Ascending aorta (tissue), 2 donors: ENCODE measurements at regions of chr14 and their contacts with region 1.

Region 1: DNA sequence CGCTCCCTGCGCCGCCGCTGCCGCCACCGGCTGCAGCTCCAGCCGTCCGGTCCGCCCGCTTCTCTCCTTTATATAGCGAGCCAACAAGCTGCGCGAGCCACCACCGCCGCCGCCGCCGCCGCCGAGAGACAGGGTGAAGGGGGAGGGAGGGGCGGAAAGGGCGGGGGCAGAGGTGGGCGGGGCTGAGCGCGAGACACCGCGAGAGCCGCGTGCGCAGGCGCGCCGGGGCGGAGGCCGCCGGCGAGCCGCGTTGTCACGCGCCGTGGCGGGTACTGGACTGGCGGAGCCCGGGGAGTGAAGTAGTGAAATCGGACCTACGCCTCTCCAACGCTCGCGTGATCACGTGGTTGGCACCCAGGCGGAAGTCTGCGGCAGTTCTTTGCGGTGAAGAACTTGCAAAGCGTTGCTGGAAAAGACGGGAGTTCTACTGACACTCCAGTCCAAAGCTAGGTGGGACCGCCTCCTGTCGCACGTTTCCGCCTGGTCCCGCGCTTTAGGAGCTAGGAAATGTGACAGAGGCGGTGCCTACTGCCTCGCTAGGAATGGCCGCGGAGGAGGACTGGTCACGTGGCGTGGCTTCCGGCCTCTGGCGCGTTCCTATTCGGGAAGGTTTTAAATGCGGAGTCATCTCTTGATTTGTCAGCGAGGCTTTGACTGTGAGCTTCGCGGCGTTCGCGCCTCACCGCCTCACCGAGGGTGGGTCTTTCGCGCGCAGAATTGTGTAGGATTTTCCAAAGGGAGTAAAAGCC is at the start of gene GTF2A1:
- DNase-seq: peak; percentile 86 to 97
- H3K4me3 ChIP-seq: peak within 1 kb of the TSS; percentile 91 to 96
- H3K27ac ChIP-seq: peak within 1 kb of the TSS; percentile 98 to 99
- H3K4me1 ChIP-seq: peaks cover 2 to 23% of the 10 kb centered on the region in 2 donors
- H3K27me3 ChIP-seq: no peaks in the 10 kb centered on the region
- CTCF ChIP-seq: no peak
- total RNA-seq, gene GTF2A1: 47.9 TPM

Region 2: GRCh38 chr14:80941241-80942182 is 279.5 kb before region 1 on chr14 and contains the start of gene CEP128:
- intact Hi-C with region 1: loop called (anchors 5 kb)
- DNase-seq: peak; percentile 85 to 98
- H3K4me3 ChIP-seq: peak within 1 kb of the TSS; percentile 58 to 74
- H3K27ac ChIP-seq: peak within 1 kb of the TSS in 1 of 2 donors; percentile 8
- H3K4me1 ChIP-seq: peaks cover 0 to 4% of the 10 kb centered on the region in 2 donors
- H3K27me3 ChIP-seq: no peaks in the 10 kb centered on the region
- CTCF ChIP-seq: no peak
- total RNA-seq, gene CEP128: 3.3 TPM

Region 3: DNA sequence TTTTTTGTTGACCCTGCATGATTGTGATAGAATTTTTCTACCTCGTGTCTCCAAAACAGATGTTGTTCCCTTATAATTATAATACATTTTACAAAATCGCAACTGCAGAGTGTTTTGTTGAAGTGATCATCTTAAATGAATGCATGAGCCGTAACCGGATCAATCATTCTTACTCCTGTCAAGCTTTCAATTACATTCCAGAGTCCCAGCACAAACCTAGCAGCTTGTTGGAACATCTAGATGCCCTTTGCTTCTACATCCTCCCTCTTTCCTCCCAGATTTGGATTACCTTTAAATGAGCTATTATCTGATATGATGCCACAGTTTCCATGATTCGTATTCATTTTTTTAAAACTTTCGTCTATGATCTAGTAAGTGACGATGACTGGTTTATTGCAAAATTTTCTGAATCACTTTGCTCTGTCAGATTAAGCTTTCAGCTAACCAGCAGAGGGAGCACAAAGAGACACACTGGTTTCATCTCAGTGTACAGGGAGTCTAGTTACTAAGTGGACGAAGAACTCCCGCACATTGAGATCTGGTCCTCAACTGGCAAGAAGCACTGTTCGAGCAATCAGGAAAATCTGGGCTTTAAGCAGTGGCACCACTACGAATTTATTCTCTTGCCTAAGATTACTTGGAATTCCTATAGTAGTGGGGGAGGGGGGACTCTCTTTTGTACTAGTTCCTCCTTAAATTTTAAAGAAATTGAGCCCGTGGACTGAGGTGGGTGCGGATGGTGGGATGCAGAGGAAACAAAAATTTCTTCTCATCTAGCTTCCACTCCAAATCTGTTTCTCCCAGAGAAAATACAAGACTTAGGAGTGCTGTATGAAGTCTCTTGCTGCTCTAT is 224.7 kb before region 1 on chr14:
- intact Hi-C with region 1: loop called (anchors 5 kb)
- DNase-seq: no peak
- H3K4me3 ChIP-seq: no peak overlapping the region
- H3K27ac ChIP-seq: no peak overlapping the region
- H3K4me1 ChIP-seq: peaks cover 0 to 2% of the 10 kb centered on the region in 2 donors
- H3K27me3 ChIP-seq: no peaks in the 10 kb centered on the region
- CTCF ChIP-seq: peak; percentile 50 to 65 (median 52)

Region 4: GRCh38 chr14:81137316-81137715 is 83.7 kb before region 1 on chr14:
- intact Hi-C with region 1: no loop called
- DNase-seq: no peak
- H3K4me3 ChIP-seq: no peak overlapping the region
- H3K27ac ChIP-seq: no peak overlapping the region
- H3K4me1 ChIP-seq: no peaks in the 10 kb centered on the region
- H3K27me3 ChIP-seq: no peaks in the 10 kb centered on the region
- CTCF ChIP-seq: no peak

Region 5: DNA sequence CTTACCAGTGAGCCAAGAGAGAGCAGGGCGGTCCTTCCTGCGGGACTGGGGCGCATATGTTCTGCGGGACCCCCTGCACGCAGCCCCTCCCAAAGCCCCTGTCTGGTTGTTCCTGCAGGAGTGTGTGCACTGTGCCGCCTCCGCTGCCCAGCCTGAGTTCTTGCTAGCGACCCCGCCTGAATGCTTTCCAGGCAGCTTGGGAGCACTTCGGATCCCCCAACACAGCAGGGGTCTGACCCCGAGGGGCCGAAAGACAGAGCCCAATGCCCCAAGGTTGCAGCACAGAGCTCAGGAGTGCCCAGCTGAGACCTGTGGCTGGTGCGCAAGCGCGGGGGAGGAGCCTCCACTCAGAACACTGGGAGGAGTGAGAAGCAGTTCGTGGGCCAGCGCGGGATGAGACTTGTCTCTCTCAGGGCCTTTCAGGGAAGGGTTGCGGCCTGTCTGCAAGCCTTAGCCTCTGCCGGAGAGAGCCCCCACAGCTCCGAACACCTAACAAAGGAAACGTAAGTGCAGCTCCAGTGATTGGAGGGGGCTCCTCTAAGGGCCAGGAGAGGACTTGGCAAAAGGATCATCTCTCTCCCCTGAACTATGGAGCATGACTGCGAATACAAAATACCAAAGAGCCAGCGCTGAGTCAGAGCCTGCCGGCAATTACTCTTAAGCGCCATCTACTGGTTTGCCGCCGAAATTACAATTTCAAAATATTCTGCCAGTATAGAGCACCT is 50.7 kb before region 1 on chr14:
- intact Hi-C with region 1: loop called (anchors 5 kb)
- DNase-seq: peak; percentile 82 to 95
- H3K4me3 ChIP-seq: peak overlapping the region; percentile 73 to 78
- H3K27ac ChIP-seq: peak overlapping the region; percentile 85 to 92
- H3K4me1 ChIP-seq: peaks cover 0 to 10% of the 10 kb centered on the region in 2 donors
- H3K27me3 ChIP-seq: no peaks in the 10 kb centered on the region
- CTCF ChIP-seq: peak; percentile 56 to 90 (median 87)

Region 6: GRCh38 chr14:81384900-81385299 is 163.9 kb after region 1 on chr14:
- intact Hi-C with region 1: no loop called
- DNase-seq: no peak
- H3K4me3 ChIP-seq: no peak overlapping the region
- H3K27ac ChIP-seq: no peak overlapping the region
- H3K4me1 ChIP-seq: no peaks in the 10 kb centered on the region
- H3K27me3 ChIP-seq: no peaks in the 10 kb centered on the region
- CTCF ChIP-seq: no peak

Region 7: DNA sequence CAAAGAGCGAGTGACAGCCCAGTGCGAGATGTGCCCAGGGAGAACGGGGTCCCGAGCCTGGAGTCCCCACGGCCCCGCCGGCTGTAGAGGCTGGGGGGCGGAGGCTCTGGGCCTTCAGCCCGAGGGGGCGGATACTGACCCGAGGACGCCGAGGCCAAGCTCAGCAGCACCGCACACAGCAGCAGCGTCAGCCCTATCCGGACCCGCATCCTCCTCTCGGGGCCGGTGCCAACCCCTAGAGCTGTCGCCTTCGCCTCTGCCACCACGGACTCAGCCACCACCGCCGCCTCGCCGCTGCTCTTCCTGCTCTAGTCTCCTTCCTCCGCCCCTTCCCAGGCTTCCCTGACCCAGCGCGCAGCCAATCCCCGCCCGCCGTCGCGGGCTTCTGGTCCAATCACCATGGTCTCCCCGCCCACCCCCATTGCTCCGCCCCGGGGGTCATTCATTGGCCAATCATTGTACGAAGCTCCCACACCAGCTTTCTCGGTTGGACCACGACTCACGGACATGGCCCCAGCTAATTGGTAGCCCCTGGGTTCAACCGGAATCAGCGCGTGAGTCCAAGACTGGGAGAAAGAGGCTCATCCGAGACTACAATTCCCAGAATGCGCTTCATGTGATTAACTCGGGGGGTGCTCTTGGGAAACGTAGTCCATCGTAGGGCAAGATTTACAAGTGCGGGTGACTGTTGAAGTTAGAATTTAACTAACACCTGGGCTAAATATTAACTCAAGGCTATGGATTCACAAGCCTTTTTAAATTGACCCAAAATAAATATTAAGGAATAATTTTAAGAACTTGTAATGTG is 312.7 kb after region 1 on chr14 and contains the start of gene SEL1L:
- intact Hi-C with region 1: loop called (anchors 1 kb)
- DNase-seq: peak; percentile 100
- H3K4me3 ChIP-seq: peak within 1 kb of the TSS; percentile 95 to 99
- H3K27ac ChIP-seq: peak within 1 kb of the TSS; percentile 64 to 79
- H3K4me1 ChIP-seq: peaks cover 0 to 33% of the 10 kb centered on the region in 2 donors
- H3K27me3 ChIP-seq: no peaks in the 10 kb centered on the region
- CTCF ChIP-seq: no peak
- total RNA-seq, gene SEL1L: 37.3 TPM